RWPE1 (cell line): ENCODE measurements at regions of chr2 and their contacts with region 1.

Region 1: GRCh38 chr2:113694438-113694837 is 62.0 kb downstream of the SLC35F5 start:
- DNase-seq: no peak
- H3K27ac ChIP-seq: no peak overlapping the region
- CTCF ChIP-seq: no peak

Region 2: DNA sequence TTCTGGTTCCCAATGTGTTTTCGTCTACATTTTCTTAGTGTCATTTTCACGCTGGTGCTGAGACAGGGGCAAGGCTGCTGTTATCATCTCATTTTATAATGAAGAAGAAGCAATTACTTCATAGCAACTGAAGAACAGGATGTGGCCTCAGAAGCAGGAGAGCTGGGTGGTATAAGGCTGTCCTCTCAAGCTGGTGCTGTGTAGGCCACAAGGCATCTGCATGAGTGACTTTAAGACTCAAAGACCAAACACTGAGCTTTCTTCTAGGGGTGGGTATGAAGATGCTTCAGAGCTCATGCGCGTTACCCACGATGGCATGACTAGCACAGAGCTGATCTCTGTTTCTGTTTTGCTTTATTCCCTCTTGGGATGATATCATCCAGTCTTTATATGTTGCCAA is 709.3 kb before region 1 on chr2:
- CTCF ChIA-PET with region 1: no interaction called
- POLR2A ChIA-PET with region 1: no interaction called
- DNase-seq: no peak
- H3K27ac ChIP-seq: no peak overlapping the region
- CTCF ChIP-seq: no peak

Region 3: GRCh38 chr2:113750385-113750784 is 55.9 kb after region 1 on chr2:
- CTCF ChIA-PET with region 1: no interaction called
- POLR2A ChIA-PET with region 1: interaction called, 10 read pairs
- DNase-seq: no peak
- H3K27ac ChIP-seq: no peak overlapping the region
- CTCF ChIP-seq: no peak